ENCODE measurements at regions of chr11 and their contacts with region 1.

Region 1: GRCh38 chr11:123020968-123021367 is 39.3 kb upstream of the BSX start:
- DNase-seq: peak in 1 of 3 donors; percentile 26
- ATAC-seq: peak; percentile 57 to 74 (median 63)
- H3K4me3 ChIP-seq: no peak overlapping the region
- H3K27ac ChIP-seq: no peak overlapping the region
- H3K4me1 ChIP-seq: peaks cover 0 to 4% (median 0%) of the 10 kb centered on the region in 4 donors
- H3K27me3 ChIP-seq: peaks cover 0 to 5% of the 10 kb centered on the region in 2 donors
- CTCF ChIP-seq: peak; percentile 18 to 46 (median 40)
- POLR2A ChIP-seq: no peak

Region 2: GRCh38 chr11:122874991-122875390 is 146.0 kb before region 1 on chr11:
- intact Hi-C with region 1: loop called in 1 of 2 experiments (anchors 10 kb)
- DNase-seq: no peak
- ATAC-seq: no peak
- H3K4me3 ChIP-seq: no peak overlapping the region
- H3K27ac ChIP-seq: no peak overlapping the region
- H3K4me1 ChIP-seq: no peaks in the 10 kb centered on the region
- H3K27me3 ChIP-seq: no peaks in the 10 kb centered on the region
- CTCF ChIP-seq: no peak
- POLR2A ChIP-seq: no peak

Region 3: GRCh38 chr11:123072332-123072761 is 51.4 kb after region 1 on chr11:
- intact Hi-C with region 1: no loop called
- DNase-seq: no peak
- ATAC-seq: no peak
- H3K4me3 ChIP-seq: no peak overlapping the region
- H3K27ac ChIP-seq: no peak overlapping the region
- H3K4me1 ChIP-seq: no peaks in the 10 kb centered on the region
- H3K27me3 ChIP-seq: no peaks in the 10 kb centered on the region
- CTCF ChIP-seq: no peak
- POLR2A ChIP-seq: no peak